ENCODE measurements at regions of chr6 and their contacts with region 1.

Region 1: GRCh38 chr6:53484476-53485280 is 60.2 kb downstream of the GCLC start:
- DNase-seq: peak; percentile 76
- H3K4me3 Mint-ChIP-seq: no peak overlapping the region
- H3K27ac Mint-ChIP-seq: no peak overlapping the region
- H3K4me1 Mint-ChIP-seq: peaks cover 16% of the 10 kb centered on the region
- H3K27me3 Mint-ChIP-seq: no peaks in the 10 kb centered on the region
- CTCF ChIP-seq: peak; percentile 93

Region 2: DNA sequence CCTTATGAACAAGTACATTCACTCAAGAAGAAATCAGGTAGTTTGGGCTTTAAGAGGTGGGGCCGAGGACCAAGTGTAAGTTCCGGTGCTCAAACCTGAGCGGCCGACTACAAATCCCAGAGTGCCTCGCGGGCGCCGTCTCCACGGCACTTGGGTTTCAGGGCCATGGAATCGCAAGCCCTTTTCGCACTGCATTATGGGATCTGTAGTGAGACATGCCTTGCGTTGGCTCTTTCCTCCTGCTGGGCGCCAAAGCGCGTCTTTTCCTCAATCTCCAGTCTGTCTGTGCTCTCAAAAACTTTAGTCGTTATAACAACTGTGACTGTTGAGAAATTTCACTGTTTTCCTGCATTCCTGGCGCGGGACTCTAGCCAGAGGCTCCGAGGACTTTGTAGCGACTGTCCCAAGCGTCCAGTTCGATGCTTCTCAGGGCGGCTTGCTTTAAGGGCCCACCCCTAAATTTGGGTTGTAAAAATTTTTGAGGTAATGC is 419.9 kb before region 1 on chr6:
- CTCF ChIA-PET with region 1: interaction called, 9 read pairs
- POLR2A ChIA-PET with region 1: no interaction called
- intact Hi-C with region 1: loop called (anchors 1 kb)
- DNase-seq: peak; percentile 98
- H3K4me3 Mint-ChIP-seq: peak overlapping the region; percentile 95
- H3K27ac Mint-ChIP-seq: peak overlapping the region; percentile 88
- H3K4me1 Mint-ChIP-seq: peaks cover 23% of the 10 kb centered on the region
- H3K27me3 Mint-ChIP-seq: no peaks in the 10 kb centered on the region
- CTCF ChIP-seq: no peak

Region 3: GRCh38 chr6:53103992-53104675 is 380.5 kb before region 1 on chr6:
- CTCF ChIA-PET with region 1: interaction called, 3 read pairs
- POLR2A ChIA-PET with region 1: interaction called, 3 read pairs
- intact Hi-C with region 1: loop called (anchors 1 kb)
- DNase-seq: peak; percentile 40
- H3K4me3 Mint-ChIP-seq: no peak overlapping the region
- H3K27ac Mint-ChIP-seq: no peak overlapping the region
- H3K4me1 Mint-ChIP-seq: peaks cover 6% of the 10 kb centered on the region
- H3K27me3 Mint-ChIP-seq: no peaks in the 10 kb centered on the region
- CTCF ChIP-seq: no peak

Region 4: DNA sequence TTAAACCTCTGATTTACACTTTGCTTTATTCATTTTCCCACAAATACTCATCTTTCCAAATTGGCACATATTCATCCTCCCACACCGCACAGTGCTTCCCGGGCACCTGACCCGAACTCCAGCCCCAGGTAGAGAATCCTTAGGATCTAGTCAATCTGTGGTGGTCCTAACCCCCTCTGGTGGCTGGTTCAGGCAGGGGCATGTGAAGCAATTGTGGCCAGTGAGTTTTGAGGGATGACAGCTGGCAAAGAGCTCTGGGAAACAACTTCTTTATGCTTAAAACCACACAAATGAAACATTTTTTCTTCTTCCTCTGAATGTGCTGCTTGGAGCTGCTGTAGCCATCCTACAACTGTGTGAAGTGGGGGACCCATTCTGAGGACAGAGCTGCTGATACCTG is 190.6 kb before region 1 on chr6:
- CTCF ChIA-PET with region 1: interaction called, 4 read pairs
- POLR2A ChIA-PET with region 1: no interaction called
- intact Hi-C with region 1: loop called (anchors 10 kb)
- DNase-seq: no peak
- H3K4me3 Mint-ChIP-seq: no peak overlapping the region
- H3K27ac Mint-ChIP-seq: no peak overlapping the region
- H3K4me1 Mint-ChIP-seq: peaks cover 5% of the 10 kb centered on the region
- H3K27me3 Mint-ChIP-seq: no peaks in the 10 kb centered on the region
- CTCF ChIP-seq: peak; percentile 39

Region 5: DNA sequence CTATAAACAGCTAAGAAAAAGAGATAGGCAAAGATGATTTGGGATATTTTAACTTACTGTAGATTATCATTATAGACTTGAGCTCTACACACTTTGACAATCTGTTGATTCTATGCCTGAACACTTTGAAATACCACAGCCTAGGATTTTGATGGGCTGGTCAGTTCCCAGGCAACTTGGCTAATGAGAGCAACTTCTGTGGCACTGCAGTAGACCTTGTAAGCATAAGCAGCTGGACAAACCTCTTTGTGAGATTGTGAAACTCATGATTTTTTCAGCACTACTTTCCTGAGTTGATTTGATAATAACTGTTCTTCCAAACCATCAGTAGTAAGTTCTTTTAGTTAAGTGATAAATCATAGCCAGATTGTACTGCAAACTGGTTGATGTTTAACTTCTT is 108.8 kb before region 1 on chr6:
- CTCF ChIA-PET with region 1: no interaction called
- POLR2A ChIA-PET with region 1: no interaction called
- intact Hi-C with region 1: no loop called
- DNase-seq: no peak
- H3K4me3 Mint-ChIP-seq: no peak overlapping the region
- H3K27ac Mint-ChIP-seq: no peak overlapping the region
- H3K4me1 Mint-ChIP-seq: no peaks in the 10 kb centered on the region
- H3K27me3 Mint-ChIP-seq: no peaks in the 10 kb centered on the region
- CTCF ChIP-seq: no peak

Region 6: DNA sequence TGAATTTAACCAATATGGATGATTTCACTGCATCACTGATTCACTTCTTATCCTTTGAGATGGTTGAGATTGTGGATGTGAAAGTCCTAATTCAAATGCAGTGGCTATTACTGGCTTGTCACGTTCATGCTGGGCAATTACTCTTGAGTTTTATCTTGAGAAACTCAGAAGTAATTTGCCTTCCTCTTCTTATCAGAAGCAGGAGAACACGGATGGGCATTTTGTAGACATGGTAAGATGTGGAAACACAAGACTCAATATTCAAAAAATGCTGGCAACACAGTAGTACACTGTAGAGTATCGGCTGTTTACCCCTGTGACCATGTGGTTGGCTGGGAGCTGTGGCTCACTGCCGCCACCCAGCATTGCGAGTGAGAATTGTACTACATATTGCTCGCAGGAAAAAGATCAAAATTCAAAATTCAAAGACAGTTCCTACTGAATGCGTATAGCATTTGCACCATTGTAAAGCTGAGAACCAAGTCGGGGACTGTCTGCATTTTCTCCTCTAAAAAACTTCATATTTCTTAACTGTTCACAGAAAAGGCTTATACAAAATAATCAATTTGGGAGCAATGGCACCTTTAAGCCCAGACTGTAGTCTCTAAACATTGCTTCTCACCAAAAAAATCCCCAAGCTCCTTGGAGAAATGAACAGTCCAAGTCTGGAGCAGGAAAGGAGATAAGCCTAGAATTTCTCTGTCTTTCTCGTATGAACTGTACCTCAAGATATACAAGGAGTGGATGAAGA is 74.0 kb before region 1 on chr6:
- CTCF ChIA-PET with region 1: interaction called, 3 read pairs
- POLR2A ChIA-PET with region 1: no interaction called
- intact Hi-C with region 1: loop called (anchors 1 kb)
- DNase-seq: peak; percentile 64
- H3K4me3 Mint-ChIP-seq: no peak overlapping the region
- H3K27ac Mint-ChIP-seq: no peak overlapping the region
- H3K4me1 Mint-ChIP-seq: no peaks in the 10 kb centered on the region
- H3K27me3 Mint-ChIP-seq: no peaks in the 10 kb centered on the region
- CTCF ChIP-seq: peak; percentile 49

Region 7: GRCh38 chr6:53437557-53438202 is 47.0 kb before region 1 on chr6:
- CTCF ChIA-PET with region 1: interaction called, 5 read pairs
- POLR2A ChIA-PET with region 1: no interaction called
- intact Hi-C with region 1: loop called (anchors 5 kb)
- DNase-seq: peak; percentile 81
- H3K4me3 Mint-ChIP-seq: no peak overlapping the region
- H3K27ac Mint-ChIP-seq: no peak overlapping the region
- H3K4me1 Mint-ChIP-seq: peaks cover 31% of the 10 kb centered on the region
- H3K27me3 Mint-ChIP-seq: no peaks in the 10 kb centered on the region
- CTCF ChIP-seq: peak; percentile 12

Region 8: GRCh38 chr6:53513519-53513966 is 28.9 kb after region 1 on chr6:
- CTCF ChIA-PET with region 1: no interaction called
- POLR2A ChIA-PET with region 1: no interaction called
- intact Hi-C with region 1: no loop called
- DNase-seq: no peak
- H3K4me3 Mint-ChIP-seq: no peak overlapping the region
- H3K27ac Mint-ChIP-seq: no peak overlapping the region
- H3K4me1 Mint-ChIP-seq: peaks cover 21% of the 10 kb centered on the region
- H3K27me3 Mint-ChIP-seq: no peaks in the 10 kb centered on the region
- CTCF ChIP-seq: no peak

Measured in MCF 10A (cell line).